ENCODE measurements at regions of chr9 and their contacts with region 1.

Region 1: DNA sequence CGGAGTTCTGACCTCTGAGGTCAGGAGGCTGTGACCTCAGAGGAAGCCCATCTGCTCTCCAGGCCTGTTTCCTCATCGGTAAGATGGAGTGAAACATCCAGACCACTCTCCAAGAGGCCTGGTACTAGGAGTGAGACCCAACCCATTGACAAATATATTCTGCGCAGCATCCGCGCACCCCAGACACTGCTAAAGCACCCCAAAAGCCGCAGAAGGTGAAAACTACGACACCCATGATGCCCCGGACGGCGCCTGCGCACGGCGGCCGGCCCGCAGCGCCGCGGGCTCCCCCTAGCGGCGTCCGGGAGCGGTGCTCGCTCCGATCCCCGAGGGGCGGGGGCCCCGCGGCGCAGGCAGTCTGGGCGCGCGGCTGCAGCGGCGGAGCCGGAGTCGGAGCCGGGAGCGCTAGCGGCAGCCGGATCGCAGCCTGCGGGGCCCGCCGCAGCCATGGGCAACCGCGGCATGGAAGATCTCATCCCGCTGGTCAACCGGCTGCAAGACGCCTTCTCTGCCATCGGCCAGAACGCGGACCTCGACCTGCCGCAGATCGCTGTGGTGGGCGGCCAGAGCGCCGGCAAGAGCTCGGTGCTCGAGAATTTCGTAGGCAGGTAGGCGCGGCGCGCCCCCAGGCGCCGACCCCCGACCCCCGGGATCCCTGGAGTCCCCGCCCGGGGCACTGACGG is at the start of gene DNM1:
- DNase-seq: peak; percentile 41 to 91 (median 65)
- ATAC-seq: peak; percentile 98
- H3K4me3 ChIP-seq: peak within 1 kb of the TSS; percentile 55
- H3K4me3 Mint-ChIP-seq: peak within 1 kb of the TSS; percentile 83
- H3K27ac ChIP-seq: no peak within 1 kb of the TSS
- H3K27ac Mint-ChIP-seq: no peak within 1 kb of the TSS
- H3K4me1 ChIP-seq: peaks cover 17% of the 10 kb centered on the region
- H3K4me1 Mint-ChIP-seq: peaks cover 5% of the 10 kb centered on the region
- H3K27me3 ChIP-seq: peaks cover 11 to 17% of the 10 kb centered on the region in 2 experiments
- H3K27me3 Mint-ChIP-seq: peaks cover 9% of the 10 kb centered on the region
- CTCF ChIP-seq: peak; percentile 72
- total RNA-seq, gene DNM1: 1.8 to 2.5 TPM

Region 2: DNA sequence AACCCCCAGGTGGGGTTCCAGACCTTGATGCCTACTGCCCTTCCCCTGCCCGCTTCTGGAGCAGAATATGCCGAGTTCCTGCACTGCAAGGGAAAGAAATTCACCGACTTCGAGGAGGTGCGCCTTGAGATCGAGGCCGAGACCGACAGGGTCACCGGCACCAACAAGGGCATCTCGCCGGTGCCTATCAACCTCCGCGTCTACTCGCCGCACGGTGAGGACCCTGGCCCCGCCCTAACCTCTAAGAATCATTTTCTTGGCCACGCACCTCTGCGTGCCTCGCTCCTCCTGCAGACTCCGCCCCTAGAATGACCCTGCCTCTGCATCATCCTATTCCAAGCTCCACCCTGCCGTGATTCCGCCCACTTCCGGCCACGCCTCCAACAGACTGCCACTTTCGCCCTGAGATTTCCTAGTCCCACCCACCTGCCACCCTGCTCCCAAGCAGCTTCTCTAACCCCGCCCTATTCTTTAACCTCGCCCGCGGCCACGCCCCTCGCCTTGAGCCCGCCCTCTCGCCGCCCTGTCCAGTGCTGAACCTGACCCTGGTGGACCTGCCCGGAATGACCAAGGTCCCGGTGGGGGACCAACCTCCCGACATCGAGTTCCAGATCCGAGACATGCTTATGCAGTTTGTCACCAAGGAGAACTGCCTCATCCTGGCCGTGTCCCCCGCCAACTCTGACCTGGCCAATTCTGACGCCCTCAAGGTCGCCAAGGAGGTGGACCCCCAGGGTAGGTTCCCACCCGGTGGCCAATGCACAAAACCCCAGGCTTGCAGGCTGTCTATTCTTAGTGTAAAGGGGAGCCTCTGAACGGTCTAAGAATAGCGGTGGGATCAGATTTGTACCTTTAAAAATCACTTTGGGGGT is 15.6 kb after region 1 on chr9:
- CTCF ChIA-PET with region 1: no interaction called
- POLR2A ChIA-PET with region 1: interaction called, 4 read pairs
- intact Hi-C with region 1: loop called in 1 of 2 experiments (anchors 2 kb)
- DNase-seq: peak; percentile 79 to 97 (median 88)
- ATAC-seq: peak; percentile 96
- H3K4me3 ChIP-seq: peak overlapping the region; percentile 60
- H3K4me3 Mint-ChIP-seq: peak overlapping the region; percentile 69
- H3K27ac ChIP-seq: no peak overlapping the region
- H3K27ac Mint-ChIP-seq: peak overlapping the region; percentile 28
- H3K4me1 ChIP-seq: peaks cover 16% of the 10 kb centered on the region
- H3K4me1 Mint-ChIP-seq: peaks cover 12% of the 10 kb centered on the region
- H3K27me3 ChIP-seq: no peaks in the 10 kb centered on the region
- H3K27me3 Mint-ChIP-seq: no peaks in the 10 kb centered on the region
- CTCF ChIP-seq: no peak

Region 3: DNA sequence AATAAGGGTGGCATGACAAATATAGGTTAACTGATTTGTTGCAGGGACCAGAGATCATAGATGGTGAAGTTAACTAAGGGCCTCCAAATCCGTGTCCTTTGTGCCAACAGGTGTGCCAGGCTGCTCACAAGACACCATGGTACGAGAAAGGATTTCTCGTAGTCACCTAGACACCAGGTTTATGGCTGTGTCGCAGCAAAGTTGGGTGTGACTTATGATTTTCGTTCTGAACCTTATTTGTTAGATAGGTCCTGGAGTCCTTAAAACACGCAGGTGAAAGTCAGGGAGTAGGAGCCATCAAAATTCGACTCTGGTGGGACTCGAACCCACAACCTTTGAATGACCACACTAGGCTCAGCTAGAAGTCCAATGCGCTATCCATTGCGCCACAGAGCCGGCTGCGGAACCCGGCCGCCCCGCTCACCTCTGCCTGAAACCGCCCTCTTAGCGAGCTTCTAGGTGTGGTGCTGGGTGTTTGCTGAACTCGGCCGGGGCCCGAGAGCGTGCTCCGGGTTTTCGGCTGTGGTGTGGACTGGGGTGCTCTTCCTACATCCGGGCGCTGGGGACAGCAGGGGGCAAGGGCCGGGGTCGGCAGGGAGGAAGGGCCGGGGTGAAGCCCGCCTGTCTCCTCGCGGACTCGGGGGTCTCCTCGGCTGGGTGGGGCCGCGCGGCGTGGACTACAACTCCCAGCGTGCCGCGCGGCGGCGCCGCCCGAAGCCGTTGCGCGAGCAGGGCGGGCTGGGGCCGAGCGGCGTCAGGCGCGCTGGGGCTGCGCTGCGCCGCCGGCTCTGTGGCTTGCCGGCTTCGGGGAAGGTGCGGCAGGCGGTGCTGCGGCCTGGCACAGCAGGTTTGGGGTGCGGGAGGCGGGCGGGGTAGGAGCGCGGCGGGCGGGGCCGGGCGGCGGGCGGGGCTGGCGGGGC is 136.9 kb after region 1 on chr9 and contains the start of gene SLC27A4:
- CTCF ChIA-PET with region 1: no interaction called
- POLR2A ChIA-PET with region 1: no interaction called
- intact Hi-C with region 1: loop called in 1 of 2 experiments (anchors 1 kb)
- DNase-seq: peak; percentile 61 to 94 (median 76)
- ATAC-seq: peak; percentile 92
- H3K4me3 ChIP-seq: peak within 1 kb of the TSS; percentile 75
- H3K4me3 Mint-ChIP-seq: peak within 1 kb of the TSS; percentile 98
- H3K27ac ChIP-seq: peak within 1 kb of the TSS; percentile 41 to 46
- H3K27ac Mint-ChIP-seq: peak within 1 kb of the TSS; percentile 81
- H3K4me1 ChIP-seq: peaks cover 21% of the 10 kb centered on the region
- H3K4me1 Mint-ChIP-seq: peaks cover 7% of the 10 kb centered on the region
- H3K27me3 ChIP-seq: no peaks in the 10 kb centered on the region
- H3K27me3 Mint-ChIP-seq: no peaks in the 10 kb centered on the region
- CTCF ChIP-seq: no peak
- total RNA-seq, gene SLC27A4: 2.2 to 3.1 TPM

Region 4: GRCh38 chr9:128470560-128470959 is 267.4 kb after region 1 on chr9:
- CTCF ChIA-PET with region 1: no interaction called
- POLR2A ChIA-PET with region 1: no interaction called
- intact Hi-C with region 1: no loop called
- DNase-seq: peak in 2 of 14 experiments; percentile 18 to 25
- ATAC-seq: peak; percentile 59
- H3K4me3 ChIP-seq: no peak overlapping the region
- H3K4me3 Mint-ChIP-seq: no peak overlapping the region
- H3K27ac ChIP-seq: no peak overlapping the region
- H3K27ac Mint-ChIP-seq: peak overlapping the region; percentile 9
- H3K4me1 ChIP-seq: no peaks in the 10 kb centered on the region
- H3K4me1 Mint-ChIP-seq: peaks cover 9% of the 10 kb centered on the region
- H3K27me3 ChIP-seq: no peaks in the 10 kb centered on the region
- H3K27me3 Mint-ChIP-seq: no peaks in the 10 kb centered on the region
- CTCF ChIP-seq: no peak